ENCODE measurements at regions of chr17 and their contacts with region 1.

Region 1: DNA sequence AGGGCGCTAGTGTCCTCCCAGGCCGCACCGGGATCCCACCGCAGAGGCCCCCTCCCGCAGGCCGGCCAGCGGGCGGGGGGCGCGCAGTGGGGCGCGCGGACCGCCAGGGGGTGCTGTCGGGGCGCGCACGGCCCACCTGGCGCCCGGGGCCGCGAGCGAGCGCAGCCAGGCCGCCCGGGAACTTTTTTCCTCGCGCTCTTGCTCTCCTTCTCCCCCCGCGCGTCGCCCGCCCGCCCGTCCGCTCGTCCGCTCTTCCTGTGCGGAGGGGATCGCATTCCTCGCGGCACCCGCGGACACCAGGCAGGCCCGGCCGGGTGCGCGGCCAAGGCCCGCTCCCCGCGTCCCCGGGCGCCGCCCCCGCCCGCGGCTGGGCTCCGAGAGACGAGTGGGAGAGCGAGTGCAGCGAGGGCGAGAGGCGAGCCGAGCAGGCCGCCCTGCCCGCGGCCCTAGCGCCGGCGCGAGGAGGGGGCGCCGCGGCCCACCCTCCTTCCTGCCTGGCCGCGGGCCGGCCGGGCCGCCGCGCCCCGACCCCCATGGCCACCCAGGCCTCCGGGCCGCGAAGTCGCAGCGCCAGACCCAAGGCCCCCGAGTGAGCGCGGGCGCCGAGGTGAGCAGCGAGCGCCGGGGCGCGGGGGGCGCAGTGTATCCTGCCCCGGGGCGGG is at the start of gene RAI1:
- DNase-seq: peak; percentile 91
- total RNA-seq, gene RAI1: 25.6 to 36.5 TPM

Region 2: GRCh38 chr17:17624741-17625140 is 56.6 kb before region 1 on chr17:
- intact Hi-C with region 1: no loop called
- DNase-seq: no peak

Region 3: GRCh38 chr17:17723354-17724261 is 42.3 kb after region 1 on chr17:
- intact Hi-C with region 1: loop called in 1 of 2 experiments (anchors 5 kb)
- DNase-seq: no peak

Region 4: DNA sequence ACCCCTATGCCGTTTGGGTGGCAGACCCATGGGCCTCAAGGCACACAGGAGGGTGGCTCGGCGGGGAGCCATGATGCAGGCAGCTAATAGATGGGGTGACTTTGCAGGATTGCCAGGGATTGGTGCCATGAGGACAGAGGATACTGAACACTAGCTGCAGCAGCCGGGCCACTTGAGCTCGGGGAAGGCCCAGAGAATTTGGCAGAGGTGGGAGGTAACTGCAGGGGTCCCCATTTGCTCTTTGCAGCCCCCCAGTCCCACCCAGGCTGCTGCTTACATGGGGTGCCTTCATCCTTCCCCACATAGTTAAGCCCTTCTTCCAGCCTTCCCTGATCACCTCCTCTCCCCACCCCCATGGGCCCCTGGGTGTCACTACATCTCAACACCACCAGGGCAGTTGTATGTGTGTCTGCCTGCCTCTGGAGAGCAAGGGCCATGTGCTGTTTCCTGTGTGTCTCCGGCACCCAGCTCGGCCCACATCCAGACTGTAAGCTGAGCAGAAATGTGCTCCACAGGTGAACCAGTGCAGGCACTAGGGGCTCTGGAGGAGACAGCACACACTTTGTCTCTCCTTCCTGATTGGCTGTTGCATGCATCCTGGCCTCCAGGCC is 103.4 kb after region 1 on chr17:
- intact Hi-C with region 1: loop called in 1 of 2 experiments (anchors 5 kb)
- DNase-seq: no peak

Region 5: GRCh38 chr17:17859909-17860765 is 178.8 kb after region 1 on chr17:
- intact Hi-C with region 1: loop called (anchors 2 to 10 kb)
- DNase-seq: peak; percentile 91

Region 6: GRCh38 chr17:18038861-18039534 is 357.7 kb after region 1 on chr17 and contains the starts of genes ATPAF2 and GID4:
- intact Hi-C with region 1: loop called (anchors 5 to 10 kb)
- DNase-seq: peak; percentile 100
- total RNA-seq, gene ATPAF2: 12.1 to 18.3 TPM
- total RNA-seq, gene GID4: 12.6 to 21.4 TPM